ENCODE measurements at regions of chr2 and their contacts with region 1.

Region 1: DNA sequence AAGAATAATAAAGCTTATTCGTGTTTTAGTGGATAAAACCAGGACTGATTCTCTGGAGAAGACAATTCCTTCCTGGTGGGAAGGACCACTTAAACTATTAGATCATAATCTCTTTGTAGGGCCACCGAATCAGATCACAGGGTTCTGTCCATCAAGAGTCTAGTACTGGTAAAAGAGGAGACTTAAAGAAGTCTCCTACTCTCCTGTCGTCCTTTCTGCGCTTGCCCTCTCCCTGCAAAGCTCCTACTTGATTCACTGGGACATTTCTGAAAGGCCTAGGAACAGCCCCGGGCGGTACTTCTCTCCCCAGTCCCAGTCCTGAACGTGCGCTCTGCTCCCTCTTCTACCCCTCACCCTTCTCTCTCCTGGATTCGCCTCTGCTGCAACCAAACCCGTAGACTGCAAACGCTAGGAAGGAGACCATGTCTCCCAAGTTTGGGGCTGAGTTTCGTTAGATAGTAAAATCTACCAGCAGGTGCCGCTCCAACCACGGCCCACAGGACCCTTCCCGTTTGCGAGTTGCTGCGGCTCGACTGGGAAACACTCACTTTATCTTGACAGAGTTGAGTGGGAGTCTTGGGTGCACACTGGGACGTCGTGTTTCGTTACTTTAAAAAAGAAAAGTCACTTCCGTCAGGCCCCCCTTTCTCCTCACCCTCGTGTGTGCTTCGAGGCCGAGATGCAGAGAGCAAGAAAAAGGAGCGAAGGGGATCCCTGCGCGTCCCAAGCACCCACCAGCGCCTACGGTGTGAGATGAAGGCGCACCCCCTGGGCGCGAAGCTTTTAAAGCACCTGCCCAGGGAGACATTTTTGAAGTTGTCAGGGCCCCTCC is 923 bp downstream of the FIGLA start:
- DNase-seq: peak; percentile 57 to 84
- H3K4me3 ChIP-seq: peak overlapping the region in 2 of 4 experiments; percentile 19 to 54; a peak in 5 of 8 replicates
- H3K27ac ChIP-seq: no peak overlapping the region
- H3K4me1 ChIP-seq: peaks cover 0 to 3% (median 0%) of the 10 kb centered on the region in 4 experiments; a peak in 1 of 7 replicates
- H3K27me3 ChIP-seq: peaks cover 35 to 58% (median 42%) of the 10 kb centered on the region in 4 experiments
- CTCF ChIP-seq: peak; percentile 75 to 92 (median 86)
- EP300 ChIP-seq: no peak
- POLR2A ChIP-seq: no peak
- RAD21 ChIP-seq: peak; percentile 89 to 94

Region 2: DNA sequence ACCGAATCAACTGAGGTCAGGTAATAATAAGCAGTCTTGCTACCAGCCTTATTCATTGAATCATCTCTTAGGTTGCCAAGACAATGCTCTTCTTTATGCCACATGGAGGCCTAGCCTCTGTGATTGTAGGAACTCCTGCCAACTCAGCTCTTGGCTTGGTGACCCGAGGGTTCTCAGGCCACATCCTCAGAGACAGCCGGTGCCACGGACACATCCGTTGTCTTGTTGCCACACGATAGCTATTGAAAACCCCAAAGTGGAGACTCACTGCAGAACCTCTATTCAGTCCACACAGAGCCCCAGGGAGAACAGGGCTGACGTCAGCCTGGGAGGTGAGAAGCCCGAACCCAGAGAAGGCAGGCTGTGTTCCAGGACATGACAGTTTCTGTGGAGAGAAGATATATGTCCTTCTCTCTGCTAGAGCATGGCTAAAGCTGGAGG is 182.4 kb before region 1 on chr2:
- CTCF ChIA-PET with region 1: no interaction called
- POLR2A ChIA-PET with region 1: no interaction called
- DNase-seq: no peak
- H3K4me3 ChIP-seq: no peak overlapping the region
- H3K27ac ChIP-seq: no peak overlapping the region
- H3K4me1 ChIP-seq: no peaks in the 10 kb centered on the region
- H3K27me3 ChIP-seq: no peaks in the 10 kb centered on the region; a peak in 1 of 7 replicates
- CTCF ChIP-seq: no peak
- EP300 ChIP-seq: no peak
- POLR2A ChIP-seq: no peak
- RAD21 ChIP-seq: no peak

Region 3: DNA sequence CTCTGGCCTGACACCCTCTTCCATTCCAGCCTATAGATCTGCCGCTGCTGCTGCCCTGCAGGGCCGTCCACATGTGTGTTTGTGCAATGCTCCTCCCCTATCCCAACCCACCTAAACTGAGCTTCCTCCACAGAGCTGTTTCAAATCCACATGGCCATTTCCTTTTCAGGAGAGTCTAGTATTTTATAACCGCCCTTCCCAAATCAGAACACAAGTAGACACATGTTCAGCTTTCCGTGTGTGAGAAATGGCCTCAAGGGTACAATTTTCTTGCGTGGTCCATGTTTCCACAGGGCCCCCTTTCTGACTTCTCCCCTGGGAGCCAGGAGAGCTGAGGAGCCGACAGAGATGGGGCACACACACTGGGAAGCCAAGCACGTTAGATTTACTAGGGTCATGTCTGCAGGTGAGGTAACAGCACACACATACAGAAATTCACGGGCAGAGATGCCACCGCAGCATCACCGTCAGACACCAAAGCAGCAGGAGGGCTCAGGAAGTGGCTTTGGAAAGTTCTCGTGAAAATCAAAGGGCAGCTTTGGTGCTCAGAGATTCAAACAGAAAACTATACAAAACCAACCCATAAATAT is 133.0 kb before region 1 on chr2:
- CTCF ChIA-PET with region 1: interaction called, 15 read pairs
- POLR2A ChIA-PET with region 1: no interaction called
- DNase-seq: peak in 1 of 2 experiments; percentile 43
- H3K4me3 ChIP-seq: no peak overlapping the region
- H3K27ac ChIP-seq: no peak overlapping the region
- H3K4me1 ChIP-seq: peaks cover 0 to 5% (median 0%) of the 10 kb centered on the region in 4 experiments; a peak in 2 of 7 replicates
- H3K27me3 ChIP-seq: peaks cover 2 to 7% (median 3%) of the 10 kb centered on the region in 4 experiments; a peak in 5 of 7 replicates
- CTCF ChIP-seq: no peak
- EP300 ChIP-seq: no peak
- POLR2A ChIP-seq: peak in 1 of 2 experiments; percentile 8; a peak in 1 of 3 replicates
- RAD21 ChIP-seq: no peak

Region 4: DNA sequence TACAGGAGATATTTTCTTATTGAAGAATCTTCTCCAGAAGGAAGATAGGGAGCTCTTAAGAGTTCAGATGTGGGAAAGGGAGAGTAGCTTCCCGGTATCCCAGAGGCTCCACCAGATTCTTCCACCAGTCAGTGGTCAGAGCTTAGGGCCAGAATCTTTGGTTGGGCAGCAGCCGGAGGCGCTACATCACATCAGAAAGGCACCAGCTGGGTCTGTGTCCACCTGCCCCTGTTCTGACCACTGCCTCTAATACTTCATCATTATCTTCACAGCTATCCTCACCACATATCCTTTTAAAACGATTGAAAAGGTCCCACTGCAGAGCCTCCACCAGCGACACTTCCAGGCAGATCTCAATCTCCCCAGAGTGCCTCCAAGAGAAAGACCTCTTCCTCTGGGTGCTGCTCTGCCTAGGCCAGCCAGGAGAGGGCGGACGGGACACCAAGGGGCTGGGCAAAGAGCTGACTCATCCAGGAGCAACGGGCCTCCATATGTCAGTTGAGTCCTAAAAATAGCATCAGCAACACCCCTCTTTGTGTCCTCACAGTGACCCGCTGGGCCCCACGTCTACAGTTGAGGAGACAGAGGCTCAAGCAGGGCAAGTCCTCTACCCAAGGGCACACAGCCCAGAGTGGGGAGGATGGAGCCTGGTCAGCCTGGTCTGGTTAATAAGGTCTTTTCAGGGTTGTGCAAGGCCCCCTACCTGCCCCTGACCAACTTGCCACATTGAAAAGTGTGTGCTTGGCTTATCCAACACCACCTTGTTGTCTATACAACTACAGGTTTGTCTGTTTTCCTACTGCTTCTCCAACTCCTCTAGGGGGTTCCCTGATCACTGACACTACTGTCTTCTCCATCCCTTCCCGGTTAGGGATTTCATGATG is 102.7 kb before region 1 on chr2:
- CTCF ChIA-PET with region 1: interaction called, 117 read pairs
- POLR2A ChIA-PET with region 1: interaction called, 3 read pairs
- DNase-seq: peak; percentile 51 to 82
- H3K4me3 ChIP-seq: no peak overlapping the region
- H3K27ac ChIP-seq: peak overlapping the region; percentile 51; the same call in 1 of the 2 replicates
- H3K4me1 ChIP-seq: peaks cover 0 to 9% (median 2%) of the 10 kb centered on the region in 4 experiments; a peak in 5 of 7 replicates
- H3K27me3 ChIP-seq: no peaks in the 10 kb centered on the region
- CTCF ChIP-seq: peak; percentile 86 to 91 (median 90)
- EP300 ChIP-seq: no peak
- POLR2A ChIP-seq: no peak
- RAD21 ChIP-seq: peak; percentile 75 to 84

Region 5: DNA sequence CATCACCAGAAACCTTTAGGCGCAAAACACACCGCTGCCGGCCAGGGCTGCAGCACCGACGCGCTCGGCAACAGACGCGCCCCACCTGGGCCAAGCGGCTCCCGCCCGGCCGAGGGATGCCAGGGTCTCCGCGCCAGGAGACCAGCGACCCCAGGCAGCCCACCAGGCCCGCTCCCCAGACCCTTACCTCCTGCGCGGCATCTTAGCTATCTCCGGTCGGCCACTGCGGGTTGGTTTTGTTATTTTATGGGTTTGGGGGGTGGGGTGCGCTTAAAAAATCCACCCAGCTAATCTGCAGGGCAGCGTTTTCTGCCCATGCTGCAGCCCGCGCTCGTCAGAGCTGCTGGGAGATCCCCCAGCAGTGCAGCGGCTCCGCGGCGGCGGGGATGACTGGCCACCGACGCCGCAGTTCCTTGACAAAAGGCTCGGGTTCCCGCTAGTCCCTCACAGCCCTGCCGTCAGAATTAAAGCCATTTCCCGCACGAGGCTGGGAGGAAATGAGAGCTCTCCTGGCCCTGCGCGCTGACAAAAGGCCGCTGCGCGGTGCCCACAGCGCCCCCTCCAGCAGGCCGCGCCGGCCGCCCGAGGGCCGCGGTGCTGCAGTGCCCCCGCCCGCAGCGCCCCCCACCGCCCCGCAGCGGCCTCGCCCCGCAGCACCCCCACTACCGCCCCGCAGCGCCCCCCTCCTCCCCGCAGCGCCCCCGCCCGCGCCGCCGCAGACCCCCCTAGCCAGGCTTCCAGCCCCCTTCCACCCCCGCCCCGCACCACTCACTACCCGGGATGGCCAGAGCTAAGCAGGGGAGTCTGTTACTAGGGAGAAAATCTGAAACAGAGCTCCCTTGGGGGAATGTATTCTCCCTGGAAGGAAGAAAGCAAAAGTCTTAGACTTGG is 21.6 kb before region 1 on chr2 and contains the start of gene ADD2:
- CTCF ChIA-PET with region 1: interaction called, 49 read pairs
- POLR2A ChIA-PET with region 1: interaction called, 5 read pairs
- DNase-seq: peak in 1 of 2 experiments; percentile 80
- H3K4me3 ChIP-seq: peak within 1 kb of the TSS; percentile 67 to 86 (median 84)
- H3K27ac ChIP-seq: peak within 1 kb of the TSS; percentile 92
- H3K4me1 ChIP-seq: peaks cover 8 to 25% (median 16%) of the 10 kb centered on the region in 4 experiments; a peak in 6 of 7 replicates
- H3K27me3 ChIP-seq: no peaks in the 10 kb centered on the region
- CTCF ChIP-seq: peak; percentile 60 to 93 (median 71)
- EP300 ChIP-seq: no peak
- POLR2A ChIP-seq: peak; percentile 73 to 82
- RAD21 ChIP-seq: peak; percentile 22 to 56; a peak in 3 of 4 replicates
- total RNA-seq, gene ADD2: 166 and 170 TPM in 2 replicates

Region 6: GRCh38 chr2:70871398-70872211 is 82.1 kb after region 1 on chr2:
- CTCF ChIA-PET with region 1: interaction called, 91 read pairs
- POLR2A ChIA-PET with region 1: no interaction called
- DNase-seq: peak in 1 of 2 experiments; percentile 98
- H3K4me3 ChIP-seq: no peak overlapping the region
- H3K27ac ChIP-seq: no peak overlapping the region
- H3K4me1 ChIP-seq: no peaks in the 10 kb centered on the region
- H3K27me3 ChIP-seq: peaks cover 6 to 42% (median 22%) of the 10 kb centered on the region in 4 experiments
- CTCF ChIP-seq: peak; percentile 89 to 99 (median 96)
- EP300 ChIP-seq: no peak
- POLR2A ChIP-seq: no peak
- RAD21 ChIP-seq: peak; percentile 92 to 96

Region 7: GRCh38 chr2:71068218-71069035 is 278.9 kb after region 1 on chr2 and contains the start of gene NAGK:
- CTCF ChIA-PET with region 1: no interaction called
- POLR2A ChIA-PET with region 1: no interaction called
- DNase-seq: peak; percentile 86 to 98
- H3K4me3 ChIP-seq: peak within 1 kb of the TSS; percentile 60 to 96 (median 82)
- H3K27ac ChIP-seq: peak within 1 kb of the TSS; percentile 78
- H3K4me1 ChIP-seq: peaks cover 0 to 6% (median 1%) of the 10 kb centered on the region in 4 experiments; a peak in 4 of 7 replicates
- H3K27me3 ChIP-seq: no peaks in the 10 kb centered on the region
- CTCF ChIP-seq: no peak
- EP300 ChIP-seq: peak in 1 of 2 experiments; percentile 3; a peak in 1 of 3 replicates
- POLR2A ChIP-seq: peak; percentile 85 to 98
- RAD21 ChIP-seq: no peak
- total RNA-seq, gene NAGK: 59.9 and 62.2 TPM in 2 replicates

Region 8: DNA sequence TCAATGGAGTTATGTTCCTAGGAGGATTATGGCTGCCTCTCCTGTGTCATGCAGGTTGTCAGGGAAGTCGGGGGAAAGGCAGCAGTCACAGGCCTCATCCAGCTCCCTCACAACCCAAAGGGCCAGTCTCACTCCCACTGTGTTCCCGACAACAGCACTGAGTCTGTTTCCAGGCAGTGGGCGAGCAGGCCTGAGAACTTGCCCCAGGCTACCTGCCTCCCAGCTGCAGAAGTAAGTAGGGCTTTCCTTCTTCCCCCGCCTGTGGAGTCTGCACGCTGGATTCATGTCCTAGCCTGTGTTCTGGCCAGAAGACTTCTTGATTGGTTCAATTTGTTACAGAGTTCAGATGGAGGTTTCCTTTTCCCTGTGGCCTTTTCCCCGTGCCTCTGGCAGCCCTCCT is 533.9 kb after region 1 on chr2:
- CTCF ChIA-PET with region 1: no interaction called
- POLR2A ChIA-PET with region 1: no interaction called
- DNase-seq: no peak
- H3K4me3 ChIP-seq: no peak overlapping the region
- H3K27ac ChIP-seq: no peak overlapping the region
- H3K4me1 ChIP-seq: peaks cover 0 to 6% (median 4%) of the 10 kb centered on the region in 4 experiments; a peak in 3 of 7 replicates
- H3K27me3 ChIP-seq: no peaks in the 10 kb centered on the region
- CTCF ChIP-seq: no peak
- EP300 ChIP-seq: no peak
- POLR2A ChIP-seq: no peak
- RAD21 ChIP-seq: no peak